Lower leg skin (tissue), 4 donors: ENCODE measurements at regions of chr1 and their contacts with region 1.

Region 1: GRCh38 chr1:45011837-45012638 is at the start of gene UROD:
- DNase-seq: peak; percentile 95 to 97
- H3K4me3 ChIP-seq: peak within 1 kb of the TSS; percentile 92
- CTCF ChIP-seq: no peak
- POLR2A ChIP-seq: no peak
- total RNA-seq, gene UROD: 26.6 to 59.0 (median 45.8) TPM

Region 2: DNA sequence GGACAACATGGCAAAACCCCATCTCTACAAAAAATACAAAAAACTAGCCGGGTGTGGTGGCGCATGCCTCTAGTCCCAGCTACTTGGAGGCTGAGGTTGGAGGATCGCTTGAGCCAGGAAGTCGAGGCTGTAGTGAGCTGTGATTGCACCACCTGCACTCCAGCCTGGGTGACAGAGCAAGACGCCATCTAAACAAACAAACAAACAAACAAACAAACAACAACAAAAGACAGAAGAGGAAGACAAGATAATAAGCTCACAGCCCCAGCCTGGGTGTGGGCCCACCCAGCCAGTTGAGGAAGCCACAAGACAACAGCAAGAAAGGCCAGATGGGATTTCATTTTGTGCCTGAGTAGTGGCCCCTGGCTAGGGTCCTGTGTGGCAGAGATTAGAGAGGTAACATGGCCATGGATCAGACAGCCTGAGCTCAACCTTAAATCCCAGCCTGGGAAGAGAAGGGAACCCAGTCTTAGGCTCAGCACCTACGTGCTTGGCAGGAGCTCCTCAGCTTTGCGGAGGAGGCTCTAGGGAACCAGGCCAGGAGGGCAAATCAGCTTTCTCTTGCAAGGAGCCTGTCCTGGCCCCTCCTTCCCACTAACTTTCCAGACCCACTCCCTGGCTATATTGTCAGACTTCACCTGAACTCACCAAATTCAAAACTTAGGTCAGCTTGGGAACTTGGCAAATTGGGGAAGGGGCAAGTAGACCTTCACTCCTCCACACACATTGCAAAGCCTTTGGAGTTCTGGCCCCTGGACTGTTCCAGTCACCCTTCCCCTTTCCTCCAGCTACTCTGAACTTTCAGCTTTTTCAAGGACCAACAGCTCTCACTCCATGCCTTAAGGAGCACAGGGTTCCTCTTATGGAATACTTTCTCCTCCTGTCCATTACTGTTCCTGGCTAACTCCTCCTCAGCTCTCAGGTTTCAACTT is 219.0 kb before region 1 on chr1:
- intact Hi-C with region 1: loop called (anchors 5 kb)
- DNase-seq: peak in 1 of 2 donors; percentile 74
- H3K4me3 ChIP-seq: no peak overlapping the region
- CTCF ChIP-seq: no peak
- POLR2A ChIP-seq: no peak

Region 3: DNA sequence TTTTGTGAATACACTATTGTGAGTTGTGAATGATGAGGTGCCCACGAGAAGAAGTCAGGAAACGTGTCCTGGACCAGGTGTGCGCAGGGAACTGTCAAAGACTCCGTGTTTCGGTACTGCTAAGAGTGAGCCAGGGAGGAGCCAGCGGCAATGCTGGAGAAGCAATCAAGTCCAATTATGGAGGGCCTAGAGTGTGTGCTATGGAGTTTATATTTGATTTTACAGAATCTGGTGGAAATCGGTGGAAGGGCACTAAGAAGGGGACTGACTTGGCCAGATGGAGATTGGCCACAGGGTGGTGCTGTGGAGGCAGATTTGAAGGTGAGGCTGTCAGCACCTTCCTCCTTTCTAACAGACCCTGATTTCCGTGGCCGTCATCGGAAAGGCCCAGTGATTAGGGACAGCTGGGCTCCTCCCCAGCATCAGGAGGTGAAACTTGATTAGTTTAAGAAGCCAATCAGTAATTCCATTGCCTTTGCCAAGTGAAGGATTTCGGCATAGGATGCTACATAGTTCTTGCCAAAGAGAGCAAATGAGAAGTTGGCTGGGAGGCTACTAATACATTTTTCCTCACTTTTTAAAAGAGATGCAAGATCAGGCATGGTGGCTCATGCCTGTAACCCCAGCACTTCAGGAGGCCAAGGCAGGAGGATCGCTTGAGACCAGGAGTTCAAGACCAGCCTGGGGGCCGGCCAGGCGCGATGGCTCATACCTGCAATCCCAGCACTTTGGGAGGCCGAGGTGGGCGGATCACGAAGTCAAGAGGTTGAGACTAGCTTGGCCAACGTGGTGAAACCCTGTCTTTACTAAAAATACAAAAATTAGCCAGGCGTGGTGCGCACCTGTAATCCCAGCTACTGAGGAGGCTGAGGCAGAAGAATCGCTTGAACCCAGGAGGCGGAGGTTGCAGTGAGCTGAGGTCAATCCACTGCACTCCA is 176.0 kb before region 1 on chr1:
- intact Hi-C with region 1: loop called (anchors 10 kb)
- DNase-seq: peak; percentile 74 to 97
- H3K4me3 ChIP-seq: no peak overlapping the region
- CTCF ChIP-seq: peak in 1 of 3 donors; percentile 56
- POLR2A ChIP-seq: no peak

Region 4: GRCh38 chr1:45097944-45098343 is 85.9 kb after region 1 on chr1:
- intact Hi-C with region 1: no loop called
- DNase-seq: no peak
- H3K4me3 ChIP-seq: no peak overlapping the region
- CTCF ChIP-seq: no peak
- POLR2A ChIP-seq: no peak